Activated CD4-positive, alpha-beta memory T cell treated with anti-CD3 and anti-CD28 coated beads, Interleukin-2, amount 10 ng/mL, durations not matched to agents 7 days and 5 days (primary cell): ENCODE measurements at regions of chr4 and their contacts with region 1.

Region 1: DNA sequence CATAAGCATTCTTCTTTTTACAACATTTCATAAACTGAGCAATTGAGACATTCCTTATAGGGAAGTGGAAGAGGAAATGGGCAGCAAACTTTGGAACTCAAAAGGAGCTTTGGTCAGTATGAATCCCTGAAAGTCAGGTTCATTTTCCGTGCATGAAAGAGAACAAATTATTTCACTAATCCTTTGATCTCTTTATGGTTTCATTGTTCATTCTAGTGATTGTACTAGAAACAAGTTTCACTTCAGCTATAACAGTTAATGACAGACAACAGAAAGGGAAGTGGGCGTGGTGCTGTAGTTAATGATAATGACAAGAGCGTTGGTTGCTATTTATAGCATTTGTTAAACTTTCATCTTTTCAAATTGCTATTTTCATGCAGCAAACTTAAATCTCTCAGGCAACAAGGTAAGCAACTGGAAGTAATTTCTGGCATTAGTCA is 98.3 kb downstream of the AREG start:
- DNase-seq: no peak
- H3K4me3 Mint-ChIP-seq: no peak overlapping the region
- H3K27ac Mint-ChIP-seq: no peak overlapping the region
- H3K4me1 Mint-ChIP-seq: peaks cover 6% of the 10 kb centered on the region
- H3K27me3 Mint-ChIP-seq: peaks cover 4% of the 10 kb centered on the region

Region 2: DNA sequence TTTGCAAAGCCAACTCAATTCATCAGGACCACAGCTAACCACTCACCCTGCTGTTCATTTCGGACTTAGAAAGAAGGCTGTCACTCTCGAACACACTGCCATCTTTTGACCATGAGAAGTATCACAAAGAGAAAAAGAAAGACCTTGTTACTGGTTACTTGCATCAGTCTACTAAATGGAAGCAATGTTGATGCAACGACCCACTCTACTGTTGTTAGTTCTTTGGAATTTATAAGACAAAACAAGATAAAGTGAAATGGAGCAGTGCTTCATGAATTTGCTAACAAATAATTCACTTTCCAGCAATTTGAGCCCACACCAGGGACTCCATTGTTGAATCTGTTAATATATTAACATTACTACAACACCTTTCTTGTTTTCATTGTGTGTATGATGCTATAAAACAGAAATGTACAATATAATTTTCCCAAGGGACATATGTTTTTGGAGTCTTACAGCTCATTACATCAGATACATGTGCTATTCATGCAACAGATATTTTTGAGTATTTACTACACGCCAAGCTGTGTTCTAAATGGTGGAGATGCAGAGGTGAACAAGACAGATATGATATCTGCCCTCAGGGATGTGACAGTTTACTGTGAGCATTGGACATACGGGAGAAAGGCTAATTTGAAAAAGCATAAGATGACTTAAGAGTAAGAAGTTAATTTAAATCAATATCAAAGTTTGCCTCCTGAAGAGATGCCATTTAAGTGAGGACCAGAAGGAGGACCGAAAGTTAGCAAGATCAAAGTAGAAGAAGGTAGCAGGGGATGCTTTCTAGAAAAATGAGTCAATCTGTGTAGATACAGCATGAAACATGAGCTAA is 11.1 kb before region 1 on chr4:
- CTCF ChIA-PET with region 1: interaction called, 10 read pairs
- POLR2A ChIA-PET with region 1: no interaction called
- DNase-seq: no peak
- H3K4me3 Mint-ChIP-seq: no peak overlapping the region
- H3K27ac Mint-ChIP-seq: no peak overlapping the region
- H3K4me1 Mint-ChIP-seq: peaks cover 2% of the 10 kb centered on the region
- H3K27me3 Mint-ChIP-seq: peaks cover 6% of the 10 kb centered on the region